Ovary (tissue), 10 donors: ENCODE measurements at regions of chr17 and their contacts with region 1.

Region 1: GRCh38 chr17:13002766-13003451 is 14.9 kb downstream of the ELAC2 start:
- DNase-seq: peak; percentile 70 to 91 (median 85)
- H3K4me3 ChIP-seq: no peak overlapping the region
- H3K27ac ChIP-seq: no peak overlapping the region
- H3K4me1 ChIP-seq: peaks cover 4% of the 10 kb centered on the region
- H3K27me3 ChIP-seq: no peaks in the 10 kb centered on the region
- CTCF ChIP-seq: peak; percentile 68 to 71 (median 70)
- EP300 ChIP-seq: no peak
- POLR2A ChIP-seq: no peak

Region 2: DNA sequence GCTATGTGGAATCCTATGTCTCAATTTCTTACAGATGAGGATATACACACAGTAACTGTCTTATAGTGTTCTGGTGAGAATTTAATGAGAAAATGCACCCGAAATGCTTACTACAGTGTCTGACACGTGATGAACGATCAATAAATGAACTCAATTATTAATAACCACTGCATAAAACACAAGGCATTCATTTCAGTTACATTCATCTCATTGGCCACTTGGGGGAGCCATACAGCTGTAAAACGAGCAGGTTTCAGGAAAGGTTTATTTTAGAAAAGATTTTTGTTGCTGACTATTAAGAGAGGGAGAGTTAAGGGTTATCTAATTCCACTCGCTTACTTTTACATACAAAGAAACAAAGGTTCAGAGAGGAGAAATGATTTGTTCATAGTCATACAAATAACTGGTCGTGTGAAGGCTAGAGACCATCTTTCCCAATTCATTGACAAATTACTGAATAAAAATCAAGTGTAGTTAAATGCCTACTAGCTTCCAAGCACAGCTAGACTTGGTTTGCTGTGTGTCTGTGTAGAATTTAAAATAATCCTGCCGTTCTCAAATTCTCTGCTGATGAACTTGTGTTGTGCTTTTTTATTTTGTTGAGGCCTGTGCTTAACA is 822.2 kb before region 1 on chr17:
- intact Hi-C with region 1: loop called in 3 of 4 experiments (anchors 5 to 10 kb)
- DNase-seq: peak in 4 of 5 donors; percentile 25 to 49 (median 38)
- H3K4me3 ChIP-seq: no peak overlapping the region
- H3K27ac ChIP-seq: no peak overlapping the region
- H3K4me1 ChIP-seq: no peaks in the 10 kb centered on the region
- H3K27me3 ChIP-seq: no peaks in the 10 kb centered on the region
- CTCF ChIP-seq: peak; percentile 37 to 69 (median 60)
- EP300 ChIP-seq: no peak
- POLR2A ChIP-seq: no peak

Region 3: DNA sequence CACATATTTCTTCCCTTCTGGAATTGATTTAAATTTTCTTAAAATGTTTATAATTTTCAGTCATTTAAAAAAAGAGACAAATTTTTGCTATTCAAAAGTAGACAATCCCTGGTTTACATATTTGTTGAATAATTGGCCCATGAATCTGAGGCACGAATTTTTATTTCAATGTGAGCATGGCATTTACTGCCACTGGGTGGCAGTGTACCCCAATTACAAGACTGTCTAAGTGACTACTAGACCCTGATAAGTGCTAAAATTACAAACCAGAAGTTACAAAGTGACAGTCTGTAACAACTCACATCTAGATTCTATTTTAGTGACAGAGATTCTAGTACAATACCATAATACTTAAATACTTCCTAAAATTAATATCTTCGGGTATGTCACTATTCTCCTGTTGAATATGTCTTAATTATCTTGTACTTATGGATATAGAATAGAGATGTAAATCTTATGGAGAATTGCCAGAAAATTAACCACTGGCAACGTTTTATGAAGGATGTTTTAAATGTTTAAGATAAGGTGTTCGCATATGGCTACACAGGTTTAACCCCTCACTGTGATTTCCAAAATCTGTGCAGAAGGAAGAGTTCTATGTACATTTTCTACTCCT is 746.4 kb before region 1 on chr17:
- intact Hi-C with region 1: loop called in 1 of 4 experiments (anchors 10 kb)
- DNase-seq: peak; percentile 39 to 61 (median 56)
- H3K4me3 ChIP-seq: no peak overlapping the region
- H3K27ac ChIP-seq: no peak overlapping the region
- H3K4me1 ChIP-seq: no peaks in the 10 kb centered on the region
- H3K27me3 ChIP-seq: no peaks in the 10 kb centered on the region
- CTCF ChIP-seq: peak; percentile 62 to 79 (median 64)
- EP300 ChIP-seq: no peak
- POLR2A ChIP-seq: no peak

Region 4: GRCh38 chr17:12545877-12546513 is 456.9 kb before region 1 on chr17:
- intact Hi-C with region 1: loop called in 1 of 4 experiments (anchors 10 kb)
- DNase-seq: peak; percentile 22 to 46 (median 24)
- H3K4me3 ChIP-seq: no peak overlapping the region
- H3K27ac ChIP-seq: no peak overlapping the region
- H3K4me1 ChIP-seq: peaks cover 3% of the 10 kb centered on the region
- H3K27me3 ChIP-seq: no peaks in the 10 kb centered on the region
- CTCF ChIP-seq: peak; percentile 31 to 50 (median 40)
- EP300 ChIP-seq: no peak
- POLR2A ChIP-seq: no peak

Region 5: DNA sequence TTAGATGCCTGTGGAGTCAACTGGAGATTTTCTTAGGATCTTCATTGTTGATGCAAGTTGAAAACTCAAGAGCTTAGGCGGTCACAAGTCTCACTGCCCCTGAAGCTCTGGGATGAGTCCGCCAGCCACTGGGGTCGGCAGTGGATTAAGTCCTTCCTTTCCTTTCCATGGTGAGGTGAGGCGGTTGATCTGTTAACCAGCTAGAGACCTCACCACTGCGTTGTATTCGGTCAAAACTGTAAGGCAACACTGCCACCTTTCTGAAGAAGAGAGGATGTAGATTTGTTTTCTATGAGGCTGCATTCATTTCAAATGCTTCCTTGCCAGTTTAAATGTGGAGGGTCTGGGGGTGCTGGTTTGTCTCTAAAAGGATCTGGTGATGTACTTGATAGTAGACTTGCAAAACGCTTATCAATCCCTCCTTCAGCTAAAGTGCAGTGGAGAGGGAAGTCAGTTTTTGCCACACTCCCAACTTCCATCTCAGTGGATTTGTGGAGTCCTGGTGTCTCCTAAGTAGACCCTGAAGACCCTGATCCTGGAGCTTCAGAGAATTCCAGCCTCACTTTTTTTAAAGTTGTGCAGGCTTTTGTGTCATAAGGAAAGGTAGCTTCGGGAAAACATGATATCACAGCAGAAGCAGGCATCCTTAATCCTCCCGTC is 335.5 kb before region 1 on chr17:
- intact Hi-C with region 1: loop called in 1 of 4 experiments (anchors 5 kb)
- DNase-seq: peak; percentile 34 to 60 (median 43)
- H3K4me3 ChIP-seq: peak overlapping the region; percentile 55
- H3K27ac ChIP-seq: peak overlapping the region in 1 of 2 donors; percentile 77
- H3K4me1 ChIP-seq: peaks cover 5% of the 10 kb centered on the region
- H3K27me3 ChIP-seq: no peaks in the 10 kb centered on the region
- CTCF ChIP-seq: peak; percentile 31 to 58 (median 37)
- EP300 ChIP-seq: no peak
- POLR2A ChIP-seq: no peak

Region 6: GRCh38 chr17:13086142-13086769 is 83.3 kb after region 1 on chr17:
- intact Hi-C with region 1: no loop called
- DNase-seq: no peak
- H3K4me3 ChIP-seq: no peak overlapping the region
- H3K27ac ChIP-seq: no peak overlapping the region
- H3K4me1 ChIP-seq: no peaks in the 10 kb centered on the region
- H3K27me3 ChIP-seq: no peaks in the 10 kb centered on the region
- CTCF ChIP-seq: no peak
- EP300 ChIP-seq: no peak
- POLR2A ChIP-seq: no peak

Region 7: GRCh38 chr17:13462146-13462545 is 459.2 kb after region 1 on chr17:
- intact Hi-C with region 1: no loop called
- DNase-seq: no peak
- H3K4me3 ChIP-seq: no peak overlapping the region
- H3K27ac ChIP-seq: no peak overlapping the region
- H3K4me1 ChIP-seq: no peaks in the 10 kb centered on the region
- H3K27me3 ChIP-seq: no peaks in the 10 kb centered on the region
- CTCF ChIP-seq: no peak
- EP300 ChIP-seq: no peak
- POLR2A ChIP-seq: no peak